B cell (primary cell): ENCODE measurements at regions of chr10 and their contacts with region 1.

Region 1: GRCh38 chr10:88974446-88975376 is 15.9 kb upstream of the FAS start:
- DNase-seq: peak; percentile 52
- ATAC-seq: peak; percentile 36
- H3K4me3 ChIP-seq: peak overlapping the region; percentile 37 to 83 (median 72)
- H3K4me3 Mint-ChIP-seq: peak overlapping the region; percentile 93
- H3K27ac ChIP-seq: peak overlapping the region in 1 of 2 donors; percentile 70
- H3K27ac Mint-ChIP-seq: peak overlapping the region; percentile 91
- H3K4me1 ChIP-seq: peaks cover 8 to 9% of the 10 kb centered on the region in 2 donors
- H3K4me1 Mint-ChIP-seq: peaks cover 14% of the 10 kb centered on the region
- H3K27me3 ChIP-seq: no peaks in the 10 kb centered on the region
- H3K27me3 Mint-ChIP-seq: no peaks in the 10 kb centered on the region
- CTCF ChIP-seq: no peak

Region 2: GRCh38 chr10:88990384-88991160 is 15.9 kb after region 1 on chr10 and contains the start of gene FAS:
- CTCF ChIA-PET with region 1: interaction called, 8 read pairs
- POLR2A ChIA-PET with region 1: interaction called, 3 read pairs
- intact Hi-C with region 1: loop called (anchors 2 kb)
- DNase-seq: peak; percentile 87
- ATAC-seq: peak; percentile 65
- H3K4me3 ChIP-seq: peak within 1 kb of the TSS; percentile 73 to 95 (median 86)
- H3K4me3 Mint-ChIP-seq: peak within 1 kb of the TSS; percentile 98
- H3K27ac ChIP-seq: peak within 1 kb of the TSS; percentile 63 to 80
- H3K27ac Mint-ChIP-seq: peak within 1 kb of the TSS; percentile 83
- H3K4me1 ChIP-seq: peaks cover 17 to 25% of the 10 kb centered on the region in 2 donors
- H3K4me1 Mint-ChIP-seq: peaks cover 43% of the 10 kb centered on the region
- H3K27me3 ChIP-seq: no peaks in the 10 kb centered on the region
- H3K27me3 Mint-ChIP-seq: no peaks in the 10 kb centered on the region
- CTCF ChIP-seq: peak; percentile 7
- total RNA-seq, gene FAS: 11.5 and 13.7 TPM in 2 replicates